GM12878 (cell line): ENCODE measurements at regions of chr17 and their contacts with region 1.

Region 1: DNA sequence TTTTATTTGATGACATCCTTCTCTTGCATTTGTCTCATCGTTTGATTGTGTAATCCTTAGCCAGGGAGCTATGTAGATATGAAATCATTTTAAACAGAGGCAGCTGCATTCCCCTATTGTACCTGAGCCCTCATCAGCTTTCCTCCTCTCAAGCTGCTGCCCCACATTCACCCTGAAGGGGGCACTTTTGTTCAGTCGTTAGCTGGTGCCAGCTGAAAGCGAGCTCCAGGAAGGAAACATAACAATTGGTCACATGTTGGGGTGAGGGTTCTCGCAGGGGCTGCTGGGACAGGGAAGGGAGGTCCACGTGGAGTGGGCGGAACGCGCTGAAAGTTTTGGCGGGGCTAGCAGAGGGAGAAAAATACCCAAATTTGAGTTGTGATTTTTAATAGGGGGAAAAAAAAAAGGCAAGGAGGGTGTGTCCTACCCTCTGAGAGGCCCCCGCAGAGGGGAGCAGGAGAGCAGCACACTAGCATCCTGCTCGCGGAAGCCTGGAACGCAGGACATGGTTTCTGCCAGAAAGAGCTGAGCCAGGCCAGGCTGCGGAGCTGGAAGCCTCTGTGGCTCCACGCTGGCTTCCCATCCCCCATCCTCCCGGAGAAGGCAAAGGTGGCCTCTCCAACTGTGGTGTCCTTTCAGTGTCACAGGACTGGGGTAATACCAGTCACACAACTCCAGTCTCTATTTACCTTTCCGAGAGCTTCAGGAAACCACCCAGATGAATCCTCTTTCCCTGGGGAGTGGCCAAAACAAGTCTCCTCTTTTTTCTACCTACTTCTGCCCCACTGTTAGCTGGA is 8.5 kb upstream of the MSL1 start:
- DNase-seq: peak; percentile 83
- ATAC-seq: peak; percentile 91
- H3K4me3 ChIP-seq: peak overlapping the region; percentile 37; the same call in 1 of the 2 replicates
- H3K27ac ChIP-seq: peak overlapping the region; percentile 82
- H3K4me1 ChIP-seq: peaks cover 28% of the 10 kb centered on the region
- H3K27me3 ChIP-seq: no peaks in the 10 kb centered on the region
- CTCF ChIP-seq: peak; percentile 84 to 98 (median 91); a peak in 4 of 6 replicates
- EP300 ChIP-seq: no peak; a peak in 1 of 4 replicates
- POLR2A ChIP-seq: peak; percentile 65
- RAD21 ChIP-seq: peak; percentile 92

Region 2: GRCh38 chr17:39653662-39654331 is 459.5 kb before region 1 on chr17:
- CTCF ChIA-PET with region 1: no interaction called
- POLR2A ChIA-PET with region 1: no interaction called
- RAD21 ChIA-PET with region 1: no interaction called
- SMC1A ChIA-PET with region 1: no interaction called
- in situ Hi-C with region 1: no loop called
- intact Hi-C with region 1: no loop called
- DNase-seq: no peak
- ATAC-seq: peak; percentile 98
- H3K4me3 ChIP-seq: no peak overlapping the region
- H3K27ac ChIP-seq: no peak overlapping the region
- H3K4me1 ChIP-seq: peaks cover 5% of the 10 kb centered on the region; the same call in 1 of the 2 replicates
- H3K27me3 ChIP-seq: no peaks in the 10 kb centered on the region
- CTCF ChIP-seq: peak; percentile 74 to 96 (median 96)
- EP300 ChIP-seq: no peak
- POLR2A ChIP-seq: no peak
- RAD21 ChIP-seq: peak; percentile 54

Region 3: DNA sequence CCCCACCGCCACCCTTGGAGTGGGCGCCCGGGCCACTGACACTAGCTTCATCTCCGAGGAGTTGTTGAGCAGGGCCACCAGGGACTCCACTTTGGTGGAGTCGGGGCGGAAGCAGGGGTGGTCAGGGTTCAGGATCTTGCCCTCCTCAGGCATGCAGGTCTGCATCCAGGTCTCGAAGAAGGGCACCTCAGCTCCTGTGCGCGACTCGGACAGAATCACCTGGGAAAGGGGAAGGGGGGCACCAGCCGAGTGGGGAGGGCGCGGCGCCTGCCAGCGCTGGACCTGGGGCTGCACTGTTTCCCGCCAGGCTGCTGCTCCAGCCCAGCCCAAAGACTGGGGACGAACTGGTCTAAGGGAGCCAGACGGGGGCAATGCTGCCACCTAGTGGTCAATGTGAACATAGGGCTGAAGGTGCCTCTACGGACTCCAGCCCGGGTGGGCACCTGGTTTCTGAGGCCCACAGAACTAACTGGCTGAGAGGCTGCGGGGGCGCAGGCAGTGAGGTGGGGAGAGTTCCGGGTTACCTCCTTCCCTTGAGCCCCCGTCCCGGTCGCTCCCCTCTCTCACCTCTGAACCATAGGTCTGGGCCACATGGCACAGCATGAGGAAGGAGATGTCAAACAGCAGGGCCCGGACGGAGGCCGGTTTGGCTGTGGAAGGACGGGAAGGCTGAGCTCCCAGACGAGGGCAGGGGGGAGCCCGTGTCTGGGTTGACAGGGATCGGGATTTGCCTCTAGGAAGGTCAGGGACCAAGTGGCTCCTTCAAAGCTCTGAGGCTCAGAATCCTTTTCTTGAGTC is 86.3 kb before region 1 on chr17:
- CTCF ChIA-PET with region 1: interaction called, 22 read pairs
- POLR2A ChIA-PET with region 1: no interaction called
- RAD21 ChIA-PET with region 1: interaction called, 10 read pairs
- SMC1A ChIA-PET with region 1: interaction called, 12 read pairs
- in situ Hi-C with region 1: no loop called
- intact Hi-C with region 1: no loop called
- DNase-seq: peak; percentile 12
- ATAC-seq: peak; percentile 100
- H3K4me3 ChIP-seq: no peak overlapping the region
- H3K27ac ChIP-seq: no peak overlapping the region
- H3K4me1 ChIP-seq: no peaks in the 10 kb centered on the region
- H3K27me3 ChIP-seq: no peaks in the 10 kb centered on the region
- CTCF ChIP-seq: peak; percentile 80 to 88 (median 86)
- EP300 ChIP-seq: no peak
- POLR2A ChIP-seq: no peak
- RAD21 ChIP-seq: peak; percentile 63

Region 4: GRCh38 chr17:40068917-40069750 is 44.2 kb before region 1 on chr17:
- CTCF ChIA-PET with region 1: interaction called, 120 read pairs
- POLR2A ChIA-PET with region 1: interaction called, 3 read pairs
- RAD21 ChIA-PET with region 1: interaction called, 42 read pairs
- SMC1A ChIA-PET with region 1: interaction called, 56 read pairs
- in situ Hi-C with region 1: no loop called
- intact Hi-C with region 1: no loop called
- DNase-seq: peak; percentile 35
- ATAC-seq: peak; percentile 71
- H3K4me3 ChIP-seq: no peak overlapping the region
- H3K27ac ChIP-seq: no peak overlapping the region
- H3K4me1 ChIP-seq: peaks cover 26% of the 10 kb centered on the region
- H3K27me3 ChIP-seq: peaks cover 0 to 4% of the 10 kb centered on the region in 2 experiments; a peak in 2 of 4 replicates
- CTCF ChIP-seq: no peak
- EP300 ChIP-seq: no peak
- POLR2A ChIP-seq: no peak
- RAD21 ChIP-seq: no peak

Region 5: DNA sequence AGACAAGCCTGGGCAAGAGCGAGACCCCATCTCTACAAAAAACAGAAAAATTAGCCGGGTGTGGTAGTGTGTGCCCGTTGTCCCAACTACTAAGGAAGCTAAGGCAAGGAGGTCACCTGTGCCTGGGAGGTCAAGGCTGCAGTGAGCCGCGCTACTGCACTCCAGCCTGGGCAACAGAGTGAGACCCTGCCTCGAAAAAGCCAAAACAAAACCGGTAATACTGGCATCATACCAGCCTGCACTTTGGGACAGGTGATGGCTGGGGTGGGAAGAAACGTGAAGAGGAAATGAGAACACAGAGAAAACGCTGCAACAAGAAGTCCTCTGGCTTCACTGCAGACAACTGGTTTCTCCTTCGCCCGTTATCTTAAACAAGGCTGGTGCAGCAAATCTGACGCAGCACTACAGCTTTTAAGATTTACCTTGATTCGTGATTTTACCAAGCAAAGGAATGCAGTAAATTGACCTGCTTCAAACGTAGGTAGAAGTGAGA is 26.3 kb after region 1 on chr17:
- CTCF ChIA-PET with region 1: interaction called, 45 read pairs
- POLR2A ChIA-PET with region 1: interaction called, 15 read pairs
- RAD21 ChIA-PET with region 1: interaction called, 32 read pairs
- SMC1A ChIA-PET with region 1: interaction called, 21 read pairs
- in situ Hi-C with region 1: no loop called
- intact Hi-C with region 1: no loop called
- DNase-seq: no peak
- ATAC-seq: peak; percentile 20
- H3K4me3 ChIP-seq: peak overlapping the region; percentile 76
- H3K27ac ChIP-seq: peak overlapping the region; percentile 97
- H3K4me1 ChIP-seq: peaks cover 2% of the 10 kb centered on the region; the same call in 1 of the 2 replicates
- H3K27me3 ChIP-seq: no peaks in the 10 kb centered on the region
- CTCF ChIP-seq: no peak
- EP300 ChIP-seq: no peak
- POLR2A ChIP-seq: no peak
- RAD21 ChIP-seq: no peak

Region 6: DNA sequence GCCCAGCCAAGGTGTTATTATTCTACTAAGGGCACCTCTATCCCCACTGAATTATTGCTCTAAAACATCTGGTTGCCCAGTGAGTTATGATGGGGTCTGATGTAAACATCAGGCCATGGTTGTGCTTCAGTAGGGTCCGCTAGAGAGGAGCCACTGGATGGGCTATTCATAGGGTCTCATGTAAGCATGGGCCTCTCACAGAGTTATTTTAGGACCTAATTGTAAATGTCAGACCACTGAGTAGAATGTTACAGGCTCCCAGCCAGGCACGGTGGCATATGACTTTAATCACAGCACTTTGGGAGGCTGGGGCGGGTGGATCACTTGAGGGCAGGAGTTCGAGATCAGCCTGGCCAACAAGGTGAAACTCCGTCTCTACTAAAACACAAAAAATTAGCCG is 69.3 kb after region 1 on chr17:
- CTCF ChIA-PET with region 1: interaction called, 14 read pairs
- POLR2A ChIA-PET with region 1: interaction called, 4 read pairs
- RAD21 ChIA-PET with region 1: interaction called, 99 read pairs
- SMC1A ChIA-PET with region 1: interaction called, 7 read pairs
- in situ Hi-C with region 1: no loop called
- intact Hi-C with region 1: no loop called
- DNase-seq: no peak
- ATAC-seq: no peak
- H3K4me3 ChIP-seq: no peak overlapping the region
- H3K27ac ChIP-seq: no peak overlapping the region
- H3K4me1 ChIP-seq: no peaks in the 10 kb centered on the region
- H3K27me3 ChIP-seq: no peaks in the 10 kb centered on the region
- CTCF ChIP-seq: no peak
- EP300 ChIP-seq: no peak
- POLR2A ChIP-seq: no peak
- RAD21 ChIP-seq: no peak

Region 7: GRCh38 chr17:40287494-40288369 is 174.4 kb after region 1 on chr17 and contains the start of gene CDC6:
- CTCF ChIA-PET with region 1: interaction called, 96 read pairs
- POLR2A ChIA-PET with region 1: interaction called, 4 read pairs
- RAD21 ChIA-PET with region 1: interaction called, 28 read pairs
- SMC1A ChIA-PET with region 1: interaction called, 74 read pairs
- in situ Hi-C with region 1: loop called (anchors 5 kb)
- intact Hi-C with region 1: loop called (anchors 5 kb)
- DNase-seq: peak; percentile 95
- ATAC-seq: peak; percentile 96
- H3K4me3 ChIP-seq: peak within 1 kb of the TSS; percentile 80
- H3K27ac ChIP-seq: peak within 1 kb of the TSS; percentile 79
- H3K4me1 ChIP-seq: peaks cover 9% of the 10 kb centered on the region
- H3K27me3 ChIP-seq: no peaks in the 10 kb centered on the region
- CTCF ChIP-seq: no peak
- EP300 ChIP-seq: no peak
- POLR2A ChIP-seq: peak; percentile 97
- RAD21 ChIP-seq: no peak
- polyA plus RNA-seq, gene CDC6: 13.3 to 18.6 TPM

Region 8: DNA sequence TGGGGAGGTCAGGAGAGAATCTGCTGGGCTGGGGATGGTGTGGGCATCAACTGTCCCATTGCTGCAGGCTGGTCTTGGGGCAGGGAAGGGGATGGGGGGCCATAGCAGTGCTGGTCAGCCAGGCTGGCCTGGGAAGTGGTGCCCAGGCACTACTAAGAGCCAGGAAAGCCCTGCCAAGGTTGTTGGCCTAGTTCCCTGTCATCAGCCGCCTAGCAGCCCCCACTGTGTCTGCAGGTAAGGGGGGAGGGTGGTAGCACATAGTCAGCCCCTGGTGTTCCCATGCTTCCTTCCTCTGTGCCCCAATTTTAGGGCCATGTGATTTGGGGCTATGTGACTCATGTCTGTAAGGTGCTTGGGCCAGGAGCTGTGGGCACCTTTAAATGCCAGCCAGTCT is 233.5 kb after region 1 on chr17:
- CTCF ChIA-PET with region 1: no interaction called
- POLR2A ChIA-PET with region 1: no interaction called
- RAD21 ChIA-PET with region 1: no interaction called
- SMC1A ChIA-PET with region 1: no interaction called
- in situ Hi-C with region 1: no loop called
- intact Hi-C with region 1: no loop called
- DNase-seq: no peak
- ATAC-seq: no peak
- H3K4me3 ChIP-seq: no peak overlapping the region
- H3K27ac ChIP-seq: no peak overlapping the region
- H3K4me1 ChIP-seq: peaks cover 36% of the 10 kb centered on the region
- H3K27me3 ChIP-seq: no peaks in the 10 kb centered on the region
- CTCF ChIP-seq: no peak
- EP300 ChIP-seq: no peak
- POLR2A ChIP-seq: no peak
- RAD21 ChIP-seq: no peak